Prostate gland (tissue), 2 donors: ENCODE measurements at regions of chr4 and their contacts with region 1.

Region 1: GRCh38 chr4:158856852-158857251 is 88.0 kb downstream of the FNIP2 start:
- DNase-seq: no peak
- H3K4me3 ChIP-seq: no peak overlapping the region
- H3K27ac ChIP-seq: no peak overlapping the region
- H3K4me1 ChIP-seq: no peaks in the 10 kb centered on the region
- H3K27me3 ChIP-seq: no peaks in the 10 kb centered on the region
- CTCF ChIP-seq: peak in 3 of 4 experiments; percentile 52 to 77 (median 65)
- POLR2A ChIP-seq: no peak

Region 2: GRCh38 chr4:158302076-158302866 is 554.6 kb before region 1 on chr4:
- intact Hi-C with region 1: no loop called
- DNase-seq: no peak
- H3K4me3 ChIP-seq: no peak overlapping the region
- H3K27ac ChIP-seq: no peak overlapping the region
- H3K4me1 ChIP-seq: no peaks in the 10 kb centered on the region
- H3K27me3 ChIP-seq: no peaks in the 10 kb centered on the region
- CTCF ChIP-seq: no peak
- POLR2A ChIP-seq: no peak

Region 3: GRCh38 chr4:159071178-159071991 is 214.5 kb after region 1 on chr4:
- intact Hi-C with region 1: no loop called
- DNase-seq: no peak
- H3K4me3 ChIP-seq: no peak overlapping the region
- H3K27ac ChIP-seq: no peak overlapping the region
- H3K4me1 ChIP-seq: no peaks in the 10 kb centered on the region
- H3K27me3 ChIP-seq: no peaks in the 10 kb centered on the region
- CTCF ChIP-seq: no peak
- POLR2A ChIP-seq: no peak

Region 4: DNA sequence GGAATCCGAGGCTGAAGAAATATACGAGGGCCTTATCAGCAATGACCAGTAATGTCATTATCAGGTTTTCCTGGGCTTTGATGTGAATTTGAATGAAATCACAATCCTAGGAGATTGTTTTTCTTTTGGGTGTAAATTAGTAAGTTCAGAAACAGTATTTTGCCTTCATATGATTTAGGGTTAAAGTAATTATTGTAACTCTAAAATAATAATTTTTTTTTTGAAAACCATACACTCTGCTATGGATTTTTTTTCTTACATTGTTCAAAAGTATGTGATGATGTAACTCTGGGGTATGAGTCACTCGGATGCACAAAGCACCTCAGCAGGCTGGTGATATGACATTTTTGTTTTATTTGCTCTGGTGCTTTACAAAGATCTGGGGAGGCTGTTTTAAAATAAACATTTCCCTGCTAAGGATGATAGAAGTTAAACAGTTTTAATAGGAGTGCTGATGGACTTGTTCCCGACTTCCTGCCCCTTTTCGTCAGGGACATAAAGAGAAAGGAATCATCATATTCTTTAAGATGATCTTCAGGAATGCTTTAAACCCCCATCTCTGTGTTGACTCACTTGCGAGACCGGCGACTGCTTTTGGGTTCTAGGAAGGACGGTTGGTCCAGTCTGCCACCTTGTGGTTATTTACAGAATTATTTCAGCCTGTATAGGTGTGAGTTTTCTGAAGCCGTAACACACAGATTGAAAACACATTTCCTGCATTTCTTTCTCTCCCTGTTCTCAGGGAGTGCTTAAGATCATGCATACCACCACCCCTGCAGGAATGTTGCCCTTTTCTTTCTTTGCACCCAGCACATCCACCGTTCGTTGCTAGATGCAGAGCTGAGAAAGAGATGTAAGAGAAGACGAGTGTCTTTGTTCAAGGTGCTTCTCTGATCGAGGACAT is 318.5 kb after region 1 on chr4:
- intact Hi-C with region 1: loop called (anchors 2 kb)
- DNase-seq: peak; percentile 73
- H3K4me3 ChIP-seq: no peak overlapping the region
- H3K27ac ChIP-seq: no peak overlapping the region
- H3K4me1 ChIP-seq: no peaks in the 10 kb centered on the region
- H3K27me3 ChIP-seq: no peaks in the 10 kb centered on the region
- CTCF ChIP-seq: peak; percentile 49 to 87 (median 83)
- POLR2A ChIP-seq: no peak

Region 5: GRCh38 chr4:159206427-159206871 is 349.6 kb after region 1 on chr4:
- intact Hi-C with region 1: loop called (anchors 10 kb)
- DNase-seq: no peak
- H3K4me3 ChIP-seq: no peak overlapping the region
- H3K27ac ChIP-seq: no peak overlapping the region
- H3K4me1 ChIP-seq: peaks cover 10% of the 10 kb centered on the region
- H3K27me3 ChIP-seq: no peaks in the 10 kb centered on the region
- CTCF ChIP-seq: no peak
- POLR2A ChIP-seq: no peak

Region 6: DNA sequence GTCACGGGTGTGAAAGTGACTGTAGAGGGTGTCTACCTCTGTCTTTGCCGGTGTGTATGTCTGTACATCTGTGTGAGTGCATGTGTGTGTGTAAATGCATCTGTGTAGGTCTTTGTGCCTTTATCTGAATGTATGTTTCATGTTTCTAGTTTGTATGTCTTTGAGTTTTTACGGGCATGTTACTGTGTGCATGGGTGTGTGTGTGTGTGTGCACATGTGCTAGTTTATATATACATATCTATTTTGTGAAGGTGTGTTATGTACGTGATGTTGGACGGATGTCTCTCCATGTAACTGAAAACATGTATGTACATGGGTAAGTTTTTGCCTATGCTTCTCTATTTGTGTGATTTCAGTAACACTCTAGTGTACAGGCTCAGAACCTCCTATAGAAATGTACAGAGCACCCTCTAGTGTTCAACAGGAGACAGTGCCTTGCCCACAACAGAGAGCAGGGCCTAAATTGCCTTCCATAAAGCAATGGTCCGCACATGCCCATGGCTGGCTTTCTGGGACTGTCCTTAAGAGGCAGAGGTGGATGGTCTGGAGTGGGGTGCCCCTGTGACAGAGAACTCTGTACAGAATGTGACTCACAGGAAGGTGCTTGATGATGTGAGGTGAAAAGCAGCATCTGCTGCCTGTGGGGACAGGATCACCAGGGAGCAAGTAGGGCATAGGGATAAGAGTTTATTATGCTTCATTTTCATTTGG is 589.6 kb after region 1 on chr4:
- intact Hi-C with region 1: loop called (anchors 10 kb)
- DNase-seq: peak; percentile 36
- H3K4me3 ChIP-seq: no peak overlapping the region
- H3K27ac ChIP-seq: no peak overlapping the region
- H3K4me1 ChIP-seq: no peaks in the 10 kb centered on the region
- H3K27me3 ChIP-seq: no peaks in the 10 kb centered on the region
- CTCF ChIP-seq: peak; percentile 28 to 85 (median 66)
- POLR2A ChIP-seq: no peak